Calu3 (cell line): ENCODE measurements at regions of chr9 and their contacts with region 1.

Region 1: GRCh38 chr9:29830821-29831220 is 2257.5 kb upstream of the C9orf72 start:
- DNase-seq: peak; percentile 54
- H3K4me3 Mint-ChIP-seq: no peak overlapping the region
- H3K27ac Mint-ChIP-seq: no peak overlapping the region
- H3K4me1 Mint-ChIP-seq: no peaks in the 10 kb centered on the region
- H3K27me3 Mint-ChIP-seq: no peaks in the 10 kb centered on the region
- CTCF ChIP-seq: peak; percentile 42

Region 2: DNA sequence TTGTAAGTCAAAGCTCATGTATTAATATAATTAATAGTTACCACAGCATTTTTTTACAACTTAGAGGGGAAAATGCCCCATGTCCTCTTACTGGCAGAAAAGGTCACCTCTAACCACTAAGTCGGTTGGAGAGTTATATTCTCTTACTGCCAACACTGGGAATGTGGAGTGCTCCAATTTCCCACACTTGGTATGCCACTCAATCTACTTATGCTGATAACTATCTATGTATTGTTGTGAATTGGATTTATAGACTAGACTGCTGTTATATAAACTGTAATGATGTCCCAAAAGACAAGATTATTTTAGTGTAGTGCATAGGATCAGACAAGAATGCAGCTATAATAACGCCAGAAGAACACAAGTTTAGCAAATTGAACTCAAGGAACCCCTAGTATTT is 127.6 kb after region 1 on chr9:
- CTCF ChIA-PET with region 1: no interaction called
- intact Hi-C with region 1: loop called (anchors 2 kb)
- DNase-seq: no peak
- H3K4me3 Mint-ChIP-seq: no peak overlapping the region
- H3K27ac Mint-ChIP-seq: no peak overlapping the region
- H3K4me1 Mint-ChIP-seq: peaks cover 8% of the 10 kb centered on the region
- H3K27me3 Mint-ChIP-seq: no peaks in the 10 kb centered on the region
- CTCF ChIP-seq: no peak

Region 3: DNA sequence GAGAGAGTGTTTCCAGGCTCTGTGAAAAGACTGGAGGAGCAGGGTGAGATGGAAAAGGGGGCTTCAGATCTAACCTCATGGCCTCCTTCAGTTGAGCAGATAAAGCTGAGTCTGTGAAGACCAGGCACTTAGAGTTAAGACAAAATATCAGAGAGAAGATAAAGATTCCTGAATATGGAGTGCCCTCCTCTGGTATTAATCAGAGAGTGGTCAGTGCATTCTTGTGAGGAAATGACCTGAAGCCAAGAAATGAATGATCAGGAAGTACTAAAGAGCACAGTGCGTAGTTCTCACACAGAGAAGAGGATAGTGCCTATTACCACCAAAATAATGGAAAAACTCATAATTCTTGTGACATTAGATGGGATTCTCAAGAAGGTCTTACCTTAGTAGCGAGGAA is 1136.7 kb after region 1 on chr9:
- CTCF ChIA-PET with region 1: no interaction called
- intact Hi-C with region 1: loop called (anchors 5 kb)
- DNase-seq: no peak
- H3K4me3 Mint-ChIP-seq: no peak overlapping the region
- H3K27ac Mint-ChIP-seq: no peak overlapping the region
- H3K4me1 Mint-ChIP-seq: no peaks in the 10 kb centered on the region
- H3K27me3 Mint-ChIP-seq: no peaks in the 10 kb centered on the region
- CTCF ChIP-seq: no peak